Aorta (tissue), 5 donors: ENCODE measurements at regions of chr3 and their contacts with region 1.

Region 1: DNA sequence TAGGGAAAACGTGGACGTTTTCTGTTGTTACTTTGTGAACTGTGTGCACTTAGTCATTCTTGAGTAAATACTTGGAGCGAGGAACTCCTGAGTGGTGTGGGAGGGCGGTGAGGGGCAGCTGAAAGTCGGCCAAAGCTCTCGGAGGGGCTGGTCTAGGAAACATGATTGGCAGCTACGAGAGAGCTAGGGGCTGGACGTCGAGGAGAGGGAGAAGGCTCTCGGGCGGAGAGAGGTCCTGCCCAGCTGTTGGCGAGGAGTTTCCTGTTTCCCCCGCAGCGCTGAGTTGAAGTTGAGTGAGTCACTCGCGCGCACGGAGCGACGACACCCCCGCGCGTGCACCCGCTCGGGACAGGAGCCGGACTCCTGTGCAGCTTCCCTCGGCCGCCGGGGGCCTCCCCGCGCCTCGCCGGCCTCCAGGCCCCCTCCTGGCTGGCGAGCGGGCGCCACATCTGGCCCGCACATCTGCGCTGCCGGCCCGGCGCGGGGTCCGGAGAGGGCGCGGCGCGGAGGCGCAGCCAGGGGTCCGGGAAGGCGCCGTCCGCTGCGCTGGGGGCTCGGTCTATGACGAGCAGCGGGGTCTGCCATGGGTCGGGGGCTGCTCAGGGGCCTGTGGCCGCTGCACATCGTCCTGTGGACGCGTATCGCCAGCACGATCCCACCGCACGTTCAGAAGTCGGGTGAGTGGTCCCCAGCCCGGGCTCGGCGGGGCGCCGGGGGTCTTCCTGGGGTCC is at the start of gene TGFBR2:
- DNase-seq: peak; percentile 98
- ATAC-seq: peak; percentile 96
- H3K4me3 ChIP-seq: peak within 1 kb of the TSS; percentile 62 to 85
- H3K27ac ChIP-seq: peak within 1 kb of the TSS; percentile 70 to 88
- H3K4me1 ChIP-seq: peaks cover 1 to 6% of the 10 kb centered on the region in 2 donors
- H3K27me3 ChIP-seq: no peaks in the 10 kb centered on the region
- total RNA-seq, gene TGFBR2: 279 to 303 TPM

Region 2: DNA sequence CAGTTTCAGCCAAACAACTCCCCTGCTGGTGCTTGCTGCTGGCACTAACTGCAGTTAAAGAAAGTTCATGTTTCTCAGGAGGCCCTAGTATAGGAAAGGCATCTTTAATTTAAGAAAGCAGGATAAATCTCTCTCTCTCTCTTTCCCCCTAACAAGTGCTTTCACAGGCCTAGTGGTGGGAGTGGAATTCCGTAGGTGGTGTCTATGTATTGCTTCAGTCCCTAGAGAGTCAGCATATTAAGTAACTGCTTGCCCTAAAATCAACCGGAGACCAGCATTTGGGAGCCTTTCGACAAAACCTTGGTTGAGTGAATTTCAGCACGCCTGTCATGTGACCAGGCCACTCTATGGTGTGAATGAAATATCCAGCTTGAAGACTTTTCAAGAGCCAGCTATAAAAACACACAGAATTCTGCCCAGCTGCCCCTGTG is 169.3 kb before region 1 on chr3:
- intact Hi-C with region 1: loop called (anchors 5 to 10 kb)
- DNase-seq: peak in 1 of 2 donors; percentile 45
- ATAC-seq: peak; percentile 73
- H3K4me3 ChIP-seq: no peak overlapping the region
- H3K27ac ChIP-seq: peak overlapping the region; percentile 43 to 88
- H3K4me1 ChIP-seq: peaks cover 8 to 12% of the 10 kb centered on the region in 2 donors
- H3K27me3 ChIP-seq: no peaks in the 10 kb centered on the region

Region 3: DNA sequence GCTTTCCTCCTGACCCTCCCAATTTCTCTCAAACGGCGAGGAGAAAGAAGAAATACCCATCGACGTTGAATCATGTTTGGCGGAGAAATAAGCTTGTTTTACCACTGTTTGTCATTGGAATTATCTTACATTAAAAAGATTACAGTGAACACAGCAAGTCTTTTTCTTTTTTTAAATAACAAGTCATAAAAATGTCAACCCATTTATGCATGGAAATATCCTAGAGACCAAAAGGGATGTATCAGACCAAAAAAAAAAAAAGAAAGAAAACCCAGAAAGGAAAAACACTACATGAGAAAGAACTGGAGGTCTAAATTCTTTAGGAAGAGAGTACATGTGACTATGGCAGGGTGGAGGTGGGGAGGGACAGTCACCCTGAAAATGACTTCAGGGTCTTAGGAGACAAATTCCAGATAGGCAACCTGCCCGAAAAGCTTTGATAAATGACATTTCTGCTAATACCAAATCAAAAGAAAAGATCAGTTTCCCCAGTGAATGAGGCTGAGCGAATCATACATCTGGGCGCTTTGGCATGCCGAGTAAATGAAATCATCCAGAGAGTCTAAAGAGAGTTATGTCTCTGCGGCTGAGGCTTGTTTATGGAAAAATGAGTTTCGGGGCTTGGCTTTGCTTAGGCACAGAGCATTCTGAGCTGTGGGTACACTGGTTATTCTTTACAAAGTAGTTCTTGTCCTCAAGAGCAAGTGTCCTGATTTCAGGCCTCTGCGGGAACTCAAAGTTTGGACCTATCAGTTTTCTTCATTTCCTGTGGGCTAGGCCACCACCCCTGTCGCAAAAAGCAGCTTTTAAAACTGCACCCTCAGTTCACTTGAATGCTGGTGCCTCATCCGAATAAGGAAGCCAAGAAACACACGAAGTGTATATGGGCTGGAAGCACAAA is 110.2 kb before region 1 on chr3:
- intact Hi-C with region 1: loop called in 1 of 2 experiments (anchors 10 kb)
- DNase-seq: peak in 1 of 2 donors; percentile 61
- ATAC-seq: peak; percentile 83
- H3K4me3 ChIP-seq: no peak overlapping the region
- H3K27ac ChIP-seq: peak overlapping the region; percentile 90 to 91
- H3K4me1 ChIP-seq: peaks cover 3 to 14% of the 10 kb centered on the region in 2 donors
- H3K27me3 ChIP-seq: no peaks in the 10 kb centered on the region

Region 4: GRCh38 chr3:30518181-30518864 is 88.1 kb before region 1 on chr3:
- intact Hi-C with region 1: loop called in 1 of 2 experiments (anchors 5 kb)
- DNase-seq: peak in 1 of 2 donors; percentile 56
- ATAC-seq: peak; percentile 92
- H3K4me3 ChIP-seq: no peak overlapping the region
- H3K27ac ChIP-seq: peak overlapping the region; percentile 67 to 80
- H3K4me1 ChIP-seq: peaks cover 2 to 20% of the 10 kb centered on the region in 2 donors
- H3K27me3 ChIP-seq: no peaks in the 10 kb centered on the region

Region 5: GRCh38 chr3:30548600-30548999 is 57.9 kb before region 1 on chr3:
- intact Hi-C with region 1: loop called in 1 of 2 experiments (anchors 5 kb)
- DNase-seq: no peak
- ATAC-seq: no peak
- H3K4me3 ChIP-seq: no peak overlapping the region
- H3K27ac ChIP-seq: no peak overlapping the region
- H3K4me1 ChIP-seq: no peaks in the 10 kb centered on the region
- H3K27me3 ChIP-seq: no peaks in the 10 kb centered on the region

Region 6: DNA sequence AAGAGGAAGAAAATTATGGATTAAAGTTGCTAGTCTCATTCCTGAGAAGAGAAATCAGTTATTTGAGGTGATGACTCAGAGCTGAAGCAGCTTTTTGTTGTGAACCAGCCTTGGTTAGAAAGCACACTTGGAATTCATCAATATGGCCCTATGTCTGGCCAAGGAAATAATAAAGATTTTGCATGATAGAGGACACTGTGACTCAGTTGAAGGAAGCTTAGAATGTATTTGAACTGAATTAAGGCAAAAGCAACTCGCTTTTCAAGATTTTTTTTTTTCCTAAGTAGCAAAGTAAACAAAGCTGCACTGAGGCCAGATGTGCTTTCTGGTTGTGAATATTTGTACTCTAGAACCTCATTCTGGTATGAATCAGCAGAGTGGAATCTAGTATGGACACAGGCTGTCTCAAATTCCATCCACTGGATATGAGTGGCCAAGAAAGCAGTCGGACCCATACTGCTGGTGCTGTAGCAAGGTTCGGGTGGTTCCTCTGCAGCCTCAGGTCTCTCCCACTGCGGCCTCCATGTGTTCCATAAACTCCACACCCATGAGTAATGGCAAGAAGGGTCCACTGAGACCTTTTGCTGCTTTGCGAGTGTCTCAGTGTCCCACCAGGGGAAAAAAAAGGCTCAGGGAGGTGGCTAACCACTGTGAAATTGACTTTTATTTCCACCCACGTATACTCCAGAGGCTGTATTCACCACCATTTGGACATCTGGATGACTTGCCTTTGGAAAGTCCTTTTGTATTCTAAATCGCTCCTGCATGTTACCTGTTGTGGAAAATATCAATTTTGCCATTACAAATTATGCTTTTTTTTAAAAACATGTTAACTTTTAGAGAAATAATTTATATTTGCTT is 53.0 kb after region 1 on chr3:
- intact Hi-C with region 1: loop called in 1 of 2 experiments (anchors 5 kb)
- DNase-seq: no peak
- ATAC-seq: peak; percentile 53
- H3K4me3 ChIP-seq: no peak overlapping the region
- H3K27ac ChIP-seq: peak overlapping the region; percentile 39 to 92
- H3K4me1 ChIP-seq: peaks cover 17 to 21% of the 10 kb centered on the region in 2 donors
- H3K27me3 ChIP-seq: no peaks in the 10 kb centered on the region